ENCODE measurements at regions of chr9 and their contacts with region 1.

Region 1: DNA sequence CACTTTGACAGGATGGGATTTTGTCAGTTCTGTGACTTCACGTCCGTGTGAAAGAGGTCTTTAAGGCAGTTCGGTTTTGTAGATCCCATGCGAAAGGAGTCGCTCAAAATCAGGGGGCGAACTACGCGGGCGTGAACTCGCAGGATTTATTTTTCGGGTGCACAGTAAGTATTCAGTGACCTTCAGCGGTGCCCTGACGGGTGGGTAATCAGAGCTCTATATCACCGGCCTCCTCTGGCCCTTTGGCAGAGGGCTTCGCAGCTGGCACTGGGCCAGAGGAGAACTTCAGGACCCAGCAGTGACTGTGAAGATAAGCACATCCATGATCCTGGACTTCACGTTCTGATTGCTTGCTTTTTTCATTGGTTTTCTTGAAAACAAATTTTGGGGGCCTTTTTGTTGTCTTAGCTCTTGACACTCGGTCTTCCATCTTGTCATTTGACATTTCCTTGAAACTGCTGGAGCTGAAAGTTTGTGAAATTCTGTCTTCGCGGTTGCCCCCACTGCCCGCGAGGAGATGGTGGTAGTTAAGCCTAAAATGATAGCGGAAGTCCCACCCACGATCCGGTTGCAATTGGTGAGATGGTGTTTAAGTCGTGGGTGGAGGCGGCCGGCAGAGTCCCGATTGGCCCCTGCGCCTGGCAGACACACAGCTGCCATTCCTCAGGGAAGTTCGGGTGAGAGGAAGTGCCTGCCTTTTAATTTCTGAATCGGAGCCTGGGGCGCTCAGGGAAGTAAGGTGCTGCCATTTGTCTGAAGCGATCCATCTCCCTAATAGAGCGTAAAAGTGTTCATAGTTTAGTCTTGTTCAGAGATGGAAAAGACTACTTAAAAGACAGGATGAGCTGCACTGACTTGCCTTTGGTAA is at the start of gene FAM120AOS:
- DNase-seq: peak; percentile 82 to 90 (median 90)
- H3K4me3 ChIP-seq: peak within 1 kb of the TSS; percentile 74 to 95 (median 79)
- H3K4me3 Mint-ChIP-seq: peak within 1 kb of the TSS; percentile 95 to 99
- H3K27ac ChIP-seq: peak within 1 kb of the TSS; percentile 87 to 90
- H3K27ac Mint-ChIP-seq: peak within 1 kb of the TSS; percentile 91 to 99 (median 96)
- H3K4me1 ChIP-seq: peaks cover 50 to 65% of the 10 kb centered on the region in 2 donors
- H3K4me1 Mint-ChIP-seq: peaks cover 52% of the 10 kb centered on the region
- H3K27me3 ChIP-seq: no peaks in the 10 kb centered on the region
- H3K27me3 Mint-ChIP-seq: no peaks in the 10 kb centered on the region
- CTCF ChIP-seq: no peak
- polyA plus RNA-seq, gene FAM120AOS: 33.2 to 47.7 (median 41.6) TPM

Region 2: GRCh38 chr9:92963831-92964626 is 489.3 kb before region 1 on chr9:
- intact Hi-C with region 1: loop called (anchors 10 kb)
- DNase-seq: peak; percentile 84 to 89 (median 87)
- H3K4me3 ChIP-seq: peak overlapping the region; percentile 60 to 94 (median 90)
- H3K4me3 Mint-ChIP-seq: peak overlapping the region; percentile 97 to 100
- H3K27ac ChIP-seq: peak overlapping the region; percentile 91 to 97
- H3K27ac Mint-ChIP-seq: peak overlapping the region; percentile 96 to 100 (median 99)
- H3K4me1 ChIP-seq: peaks cover 49 to 56% of the 10 kb centered on the region in 2 donors
- H3K4me1 Mint-ChIP-seq: peaks cover 50% of the 10 kb centered on the region
- H3K27me3 ChIP-seq: no peaks in the 10 kb centered on the region
- H3K27me3 Mint-ChIP-seq: no peaks in the 10 kb centered on the region
- CTCF ChIP-seq: no peak

Region 3: GRCh38 chr9:93413530-93413929 is 39.8 kb before region 1 on chr9:
- intact Hi-C with region 1: no loop called
- DNase-seq: no peak
- H3K4me3 ChIP-seq: no peak overlapping the region
- H3K4me3 Mint-ChIP-seq: no peak overlapping the region
- H3K27ac ChIP-seq: no peak overlapping the region
- H3K27ac Mint-ChIP-seq: no peak overlapping the region
- H3K4me1 ChIP-seq: no peaks in the 10 kb centered on the region
- H3K4me1 Mint-ChIP-seq: no peaks in the 10 kb centered on the region
- H3K27me3 ChIP-seq: peaks cover 2 to 3% of the 10 kb centered on the region in 2 donors
- H3K27me3 Mint-ChIP-seq: peaks cover 10 to 27% (median 11%) of the 10 kb centered on the region in 3 donors
- CTCF ChIP-seq: no peak

Region 4: GRCh38 chr9:93501406-93501805 is 48.1 kb after region 1 on chr9:
- intact Hi-C with region 1: loop called (anchors 2 to 5 kb)
- DNase-seq: no peak
- H3K4me3 ChIP-seq: peak overlapping the region in 2 of 3 experiments; percentile 25 to 61
- H3K4me3 Mint-ChIP-seq: peak overlapping the region; percentile 69 to 82
- H3K27ac ChIP-seq: peak overlapping the region in 1 of 2 donors; percentile 72
- H3K27ac Mint-ChIP-seq: peak overlapping the region; percentile 86 to 99 (median 87)
- H3K4me1 ChIP-seq: peaks cover 50 to 63% of the 10 kb centered on the region in 2 donors
- H3K4me1 Mint-ChIP-seq: peaks cover 65% of the 10 kb centered on the region
- H3K27me3 ChIP-seq: no peaks in the 10 kb centered on the region
- H3K27me3 Mint-ChIP-seq: no peaks in the 10 kb centered on the region
- CTCF ChIP-seq: no peak

Region 5: GRCh38 chr9:93575796-93576257 is 122.5 kb after region 1 on chr9:
- intact Hi-C with region 1: loop called in 1 of 2 experiments (anchors 5 kb)
- DNase-seq: peak; percentile 72 to 82 (median 72)
- H3K4me3 ChIP-seq: peak overlapping the region; percentile 72 to 92 (median 84)
- H3K4me3 Mint-ChIP-seq: peak overlapping the region; percentile 94 to 97
- H3K27ac ChIP-seq: peak overlapping the region; percentile 81 to 90
- H3K27ac Mint-ChIP-seq: peak overlapping the region; percentile 87 to 96 (median 92)
- H3K4me1 ChIP-seq: peaks cover 25 to 37% of the 10 kb centered on the region in 2 donors
- H3K4me1 Mint-ChIP-seq: peaks cover 55% of the 10 kb centered on the region
- H3K27me3 ChIP-seq: no peaks in the 10 kb centered on the region
- H3K27me3 Mint-ChIP-seq: peaks cover 0 to 1% (median 0%) of the 10 kb centered on the region in 3 donors
- CTCF ChIP-seq: no peak

Region 6: GRCh38 chr9:94443032-94443722 is 989.9 kb after region 1 on chr9:
- intact Hi-C with region 1: no loop called
- DNase-seq: no peak
- H3K4me3 ChIP-seq: no peak overlapping the region
- H3K4me3 Mint-ChIP-seq: no peak overlapping the region
- H3K27ac ChIP-seq: no peak overlapping the region
- H3K27ac Mint-ChIP-seq: peak overlapping the region in 2 of 7 donors; percentile 43 to 50
- H3K4me1 ChIP-seq: no peaks in the 10 kb centered on the region
- H3K4me1 Mint-ChIP-seq: no peaks in the 10 kb centered on the region
- H3K27me3 ChIP-seq: no peaks in the 10 kb centered on the region
- H3K27me3 Mint-ChIP-seq: peaks cover 0 to 1% (median 0%) of the 10 kb centered on the region in 3 donors
- CTCF ChIP-seq: no peak

Measured in CD14-positive monocyte (primary cell).